ENCODE measurements at regions of chr16 and their contacts with region 1.

Region 1: GRCh38 chr16:49608779-49609178 is 235.2 kb downstream of the C16orf78 start:
- DNase-seq: peak in 1 of 2 donors; percentile 41
- ATAC-seq: peak; percentile 42 to 94 (median 86)
- H3K4me3 ChIP-seq: no peak overlapping the region
- H3K27ac ChIP-seq: no peak overlapping the region
- H3K4me1 ChIP-seq: peaks cover 0 to 6% (median 0%) of the 10 kb centered on the region in 9 donors
- H3K27me3 ChIP-seq: no peaks in the 10 kb centered on the region
- CTCF ChIP-seq: peak in 8 of 9 donors; percentile 41 to 72 (median 62)

Region 2: GRCh38 chr16:49866595-49867071 is 257.9 kb after region 1 on chr16:
- intact Hi-C with region 1: loop called in 1 of 10 experiments (anchors 10 kb)
- DNase-seq: no peak
- ATAC-seq: peak in 4 of 8 donors; percentile 25 to 56 (median 36)
- H3K4me3 ChIP-seq: no peak overlapping the region
- H3K27ac ChIP-seq: peak overlapping the region in 4 of 10 donors; percentile 35 to 50 (median 41)
- H3K4me1 ChIP-seq: peaks cover 0 to 21% (median 4%) of the 10 kb centered on the region in 9 donors
- H3K27me3 ChIP-seq: peaks cover 0 to 8% (median 0%) of the 10 kb centered on the region in 7 donors
- CTCF ChIP-seq: no peak

Region 3: DNA sequence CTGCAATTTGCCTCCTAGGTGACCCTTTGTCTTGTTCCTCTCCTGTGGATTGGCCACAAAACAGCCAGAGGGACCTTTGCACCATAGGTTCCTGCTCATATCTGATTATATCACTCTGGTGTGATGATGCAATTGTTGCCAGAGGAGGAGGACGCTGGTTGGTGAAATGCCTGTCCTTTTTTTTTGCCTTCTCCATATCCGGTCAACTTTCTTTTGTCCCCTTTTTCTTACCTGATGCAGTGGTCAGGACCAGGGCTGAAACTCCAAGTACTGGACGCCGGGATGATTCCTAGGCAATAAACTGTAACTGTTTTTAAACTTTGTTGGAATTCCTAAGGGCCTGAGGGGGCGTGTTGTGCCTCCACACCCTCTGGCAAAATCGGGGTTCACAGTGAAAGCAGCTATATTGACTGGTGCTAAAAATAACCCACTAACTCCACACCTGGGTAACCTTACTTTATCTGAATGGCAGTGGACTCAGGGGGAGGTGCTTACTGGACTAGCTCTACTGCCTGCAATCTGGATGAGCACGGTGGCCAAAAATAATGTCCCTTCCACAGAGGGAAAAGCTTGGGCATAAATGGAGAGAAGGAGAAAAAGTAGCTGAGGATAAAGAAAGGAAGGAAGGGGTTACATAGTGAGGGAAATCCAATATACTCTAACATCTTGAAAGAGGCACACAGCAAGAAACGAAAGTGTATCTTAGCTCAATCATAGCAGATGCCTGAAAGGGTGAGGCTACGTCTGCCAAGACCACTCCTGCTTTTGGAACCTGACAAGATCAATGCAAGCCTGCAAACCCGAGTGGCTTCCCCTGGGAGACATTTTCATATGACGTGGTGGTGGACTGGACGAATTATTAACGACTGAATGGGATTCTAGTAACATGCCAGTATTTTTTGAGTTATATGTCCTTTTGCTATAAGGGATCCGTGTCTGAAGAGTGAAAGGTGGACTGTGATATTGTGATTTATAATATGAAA is 275.5 kb after region 1 on chr16:
- intact Hi-C with region 1: loop called in 1 of 10 experiments (anchors 10 kb)
- DNase-seq: no peak
- ATAC-seq: no peak
- H3K4me3 ChIP-seq: no peak overlapping the region
- H3K27ac ChIP-seq: no peak overlapping the region
- H3K4me1 ChIP-seq: no peaks in the 10 kb centered on the region
- H3K27me3 ChIP-seq: peaks cover 0 to 22% (median 0%) of the 10 kb centered on the region in 7 donors
- CTCF ChIP-seq: no peak

Region 4: DNA sequence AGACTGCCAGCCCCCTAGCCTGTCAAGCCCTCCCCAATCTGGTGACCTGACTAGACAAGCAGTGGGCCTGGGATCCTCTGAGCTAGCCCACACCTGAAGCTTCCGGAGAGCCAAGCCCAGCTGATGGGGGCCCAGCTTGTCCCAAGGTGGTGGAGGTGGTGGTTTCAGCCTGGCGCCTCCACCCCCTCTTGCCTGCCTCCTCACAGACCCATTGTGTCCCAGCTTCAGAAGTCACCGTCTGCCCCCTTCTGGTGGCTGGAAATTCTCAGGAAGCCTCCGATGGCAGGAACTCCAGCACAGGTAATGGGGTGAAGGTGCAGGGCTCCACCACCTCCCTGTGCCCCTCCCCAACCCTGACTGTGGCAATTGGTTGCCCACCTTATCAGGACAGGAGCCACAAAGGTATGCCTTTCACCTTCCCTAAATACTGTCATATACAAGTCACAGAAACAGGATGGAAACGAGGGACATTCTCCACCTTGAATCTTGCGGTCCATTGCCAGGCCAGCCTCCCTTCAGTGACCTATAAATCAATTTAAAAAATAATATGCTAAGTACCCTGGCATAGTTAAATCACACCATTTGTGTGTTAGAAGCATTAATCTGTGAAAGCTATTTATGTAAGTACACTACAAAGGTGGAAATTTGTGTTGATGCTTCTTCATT is 313.1 kb after region 1 on chr16:
- intact Hi-C with region 1: loop called in 4 of 10 experiments (anchors 1 to 10 kb)
- DNase-seq: peak; percentile 43 to 65
- ATAC-seq: peak; percentile 63 to 86 (median 76)
- H3K4me3 ChIP-seq: no peak overlapping the region
- H3K27ac ChIP-seq: no peak overlapping the region
- H3K4me1 ChIP-seq: peaks cover 0 to 4% (median 0%) of the 10 kb centered on the region in 9 donors
- H3K27me3 ChIP-seq: peaks cover 0 to 19% (median 6%) of the 10 kb centered on the region in 7 donors
- CTCF ChIP-seq: peak; percentile 23 to 77 (median 69)